Sigmoid colon (tissue), 7 donors: ENCODE measurements at regions of chr4 and their contacts with region 1.

Region 1: GRCh38 chr4:2755837-2756694 is at the start of gene TNIP2:
- DNase-seq: peak; percentile 95
- H3K4me3 ChIP-seq: peak within 1 kb of the TSS; percentile 51 to 86 (median 80)
- H3K27ac ChIP-seq: peak within 1 kb of the TSS; percentile 76 to 84 (median 82)
- H3K4me1 ChIP-seq: peaks cover 0 to 32% (median 23%) of the 10 kb centered on the region in 4 donors
- H3K27me3 ChIP-seq: no peaks in the 10 kb centered on the region
- CTCF ChIP-seq: peak in 3 of 4 experiments; percentile 12 to 37 (median 16)
- EP300 ChIP-seq: no peak
- POLR2A ChIP-seq: no peak
- total RNA-seq, gene TNIP2: 56.3 to 68.8 (median 66.9) TPM

Region 2: GRCh38 chr4:2468445-2469192 is 287.4 kb before region 1 on chr4 and contains the start of gene RNF4:
- intact Hi-C with region 1: loop called (anchors 5 kb)
- DNase-seq: peak; percentile 98
- H3K4me3 ChIP-seq: peak within 1 kb of the TSS; percentile 84 to 93 (median 86)
- H3K27ac ChIP-seq: peak within 1 kb of the TSS; percentile 89 to 98 (median 94)
- H3K4me1 ChIP-seq: peaks cover 0 to 34% (median 27%) of the 10 kb centered on the region in 4 donors
- H3K27me3 ChIP-seq: no peaks in the 10 kb centered on the region
- CTCF ChIP-seq: no peak
- EP300 ChIP-seq: no peak
- POLR2A ChIP-seq: peak in 1 of 2 donors; percentile 56
- total RNA-seq, gene RNF4: 28.5 to 51.0 (median 40.4) TPM

Region 3: GRCh38 chr4:2696423-2696822 is 59.6 kb before region 1 on chr4:
- intact Hi-C with region 1: no loop called
- DNase-seq: no peak
- H3K4me3 ChIP-seq: no peak overlapping the region
- H3K27ac ChIP-seq: no peak overlapping the region
- H3K4me1 ChIP-seq: no peaks in the 10 kb centered on the region
- H3K27me3 ChIP-seq: no peaks in the 10 kb centered on the region
- CTCF ChIP-seq: no peak
- EP300 ChIP-seq: no peak
- POLR2A ChIP-seq: no peak

Region 4: GRCh38 chr4:2792711-2793585 is 36.9 kb after region 1 on chr4 and contains the start of gene SH3BP2:
- intact Hi-C with region 1: loop called (anchors 5 kb)
- DNase-seq: peak; percentile 88
- H3K4me3 ChIP-seq: peak within 1 kb of the TSS; percentile 50 to 76 (median 64)
- H3K27ac ChIP-seq: peak within 1 kb of the TSS; percentile 71 to 81 (median 79)
- H3K4me1 ChIP-seq: peaks cover 0 to 60% (median 55%) of the 10 kb centered on the region in 4 donors
- H3K27me3 ChIP-seq: no peaks in the 10 kb centered on the region
- CTCF ChIP-seq: no peak
- EP300 ChIP-seq: no peak
- POLR2A ChIP-seq: no peak
- total RNA-seq, gene SH3BP2: 18.4 to 49.3 (median 24.2) TPM

Region 5: GRCh38 chr4:2843263-2843940 is 87.3 kb after region 1 on chr4 and contains the start of gene ADD1:
- intact Hi-C with region 1: loop called (anchors 2 kb)
- DNase-seq: peak; percentile 96
- H3K4me3 ChIP-seq: peak within 1 kb of the TSS; percentile 86 to 95 (median 90)
- H3K27ac ChIP-seq: peak within 1 kb of the TSS; percentile 93 to 99 (median 96)
- H3K4me1 ChIP-seq: peaks cover 0 to 52% (median 42%) of the 10 kb centered on the region in 4 donors
- H3K27me3 ChIP-seq: no peaks in the 10 kb centered on the region
- CTCF ChIP-seq: no peak
- EP300 ChIP-seq: peak in 1 of 4 donors; percentile 8
- POLR2A ChIP-seq: peak; percentile 81 to 90
- total RNA-seq, gene ADD1: 166 to 378 (median 183) TPM

Region 6: GRCh38 chr4:3074078-3074795 is 318.2 kb after region 1 on chr4 and contains the starts of genes HTT and HTT-AS:
- intact Hi-C with region 1: loop called (anchors 10 kb)
- DNase-seq: peak; percentile 98
- H3K4me3 ChIP-seq: peak within 1 kb of the TSS; percentile 80 to 86 (median 82)
- H3K27ac ChIP-seq: peak within 1 kb of the TSS; percentile 86 to 91 (median 89)
- H3K4me1 ChIP-seq: peaks cover 0 to 31% (median 21%) of the 10 kb centered on the region in 4 donors
- H3K27me3 ChIP-seq: no peaks in the 10 kb centered on the region
- CTCF ChIP-seq: no peak
- EP300 ChIP-seq: no peak
- POLR2A ChIP-seq: peak; percentile 49 to 62
- total RNA-seq, gene HTT: 17.0 to 41.5 (median 26.5) TPM
- total RNA-seq, gene HTT-AS: not detected